Activated T-helper 1 cell treated with anti-CD3 and anti-CD28 coated beads, Interleukin-12 subunit alpha, Interleukin-12 subunit beta, Interleukin-2, Interleukin-4 antibody, amounts not matched to agents 30 ng/mL and 10 ng/mL and 1 ng/mL, durations not matched to agents 14 hours and 24 hours and 36 hours (primary cell): ENCODE measurements at regions of chr2 and their contacts with region 1.

Region 1: DNA sequence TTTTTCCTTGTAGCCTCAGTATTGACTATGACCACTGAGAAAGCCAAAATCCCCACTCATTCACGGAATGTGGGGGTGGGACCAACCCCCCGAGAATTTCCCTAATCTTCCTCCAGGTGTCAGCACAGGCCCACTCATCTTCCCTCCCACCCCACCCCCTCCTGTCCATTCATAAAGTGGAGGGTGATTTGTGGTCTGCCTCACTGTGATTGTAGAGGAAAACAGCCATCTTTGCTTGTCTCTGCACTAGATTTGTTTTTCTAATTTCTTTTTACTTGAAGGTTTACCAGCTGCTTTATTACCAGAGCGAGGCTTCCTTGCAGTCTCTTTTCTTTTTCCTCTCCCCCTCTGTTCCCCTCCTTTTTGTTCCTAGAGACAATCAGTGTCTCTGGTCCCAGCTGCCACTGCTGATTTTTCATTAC is 171.8 kb downstream of the ICOS start:
- DNase-seq: peak; percentile 18
- H3K4me3 Mint-ChIP-seq: peak overlapping the region; percentile 60
- H3K27ac Mint-ChIP-seq: peak overlapping the region; percentile 90
- H3K4me1 Mint-ChIP-seq: peaks cover 81% of the 10 kb centered on the region
- H3K27me3 Mint-ChIP-seq: no peaks in the 10 kb centered on the region

Region 2: DNA sequence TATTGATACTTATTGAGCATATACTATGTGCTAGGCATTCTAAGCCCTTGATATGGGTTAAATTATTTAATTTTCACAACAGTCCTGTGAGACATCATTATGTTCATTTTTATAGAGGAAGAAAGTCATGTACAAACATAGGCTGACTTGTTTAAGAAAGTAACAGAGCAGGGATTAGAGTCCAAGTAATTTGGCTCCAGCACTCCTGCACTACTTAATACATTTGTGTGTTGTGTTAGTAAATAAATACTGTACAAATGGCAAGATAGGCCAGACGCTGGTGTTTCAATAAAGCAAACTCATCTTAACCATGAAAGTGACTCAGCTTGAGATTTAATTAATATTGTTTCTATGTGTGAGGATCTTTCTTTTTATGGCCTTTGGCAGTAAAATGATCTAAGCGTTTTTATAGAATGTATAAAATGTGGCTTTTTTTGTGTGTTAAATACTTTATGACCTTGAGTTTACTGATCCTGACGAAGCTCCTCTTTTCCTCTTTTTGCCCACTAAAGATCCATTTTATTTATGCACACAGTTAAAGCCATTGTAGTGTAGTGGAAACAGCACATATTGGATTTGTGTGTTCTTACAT is 1072.4 kb before region 1 on chr2:
- intact Hi-C with region 1: no loop called
- DNase-seq: no peak
- H3K4me3 Mint-ChIP-seq: no peak overlapping the region
- H3K27ac Mint-ChIP-seq: no peak overlapping the region
- H3K4me1 Mint-ChIP-seq: peaks cover 9% of the 10 kb centered on the region
- H3K27me3 Mint-ChIP-seq: no peaks in the 10 kb centered on the region

Region 3: GRCh38 chr2:203893401-203893800 is 214.9 kb before region 1 on chr2:
- intact Hi-C with region 1: loop called (anchors 1 kb)
- DNase-seq: no peak
- H3K4me3 Mint-ChIP-seq: no peak overlapping the region
- H3K27ac Mint-ChIP-seq: peak overlapping the region; percentile 89
- H3K4me1 Mint-ChIP-seq: peaks cover 73% of the 10 kb centered on the region
- H3K27me3 Mint-ChIP-seq: no peaks in the 10 kb centered on the region

Region 4: GRCh38 chr2:204015118-204015843 is 93.1 kb before region 1 on chr2:
- intact Hi-C with region 1: loop called (anchors 1 kb)
- DNase-seq: no peak
- H3K4me3 Mint-ChIP-seq: peak overlapping the region; percentile 27
- H3K27ac Mint-ChIP-seq: peak overlapping the region; percentile 73
- H3K4me1 Mint-ChIP-seq: peaks cover 90% of the 10 kb centered on the region
- H3K27me3 Mint-ChIP-seq: no peaks in the 10 kb centered on the region

Region 5: GRCh38 chr2:204145263-204145751 is 37.0 kb after region 1 on chr2:
- intact Hi-C with region 1: loop called (anchors 1 kb)
- DNase-seq: peak; percentile 71
- H3K4me3 Mint-ChIP-seq: peak overlapping the region; percentile 79
- H3K27ac Mint-ChIP-seq: peak overlapping the region; percentile 63
- H3K4me1 Mint-ChIP-seq: peaks cover 15% of the 10 kb centered on the region
- H3K27me3 Mint-ChIP-seq: peaks cover 8% of the 10 kb centered on the region

Region 6: DNA sequence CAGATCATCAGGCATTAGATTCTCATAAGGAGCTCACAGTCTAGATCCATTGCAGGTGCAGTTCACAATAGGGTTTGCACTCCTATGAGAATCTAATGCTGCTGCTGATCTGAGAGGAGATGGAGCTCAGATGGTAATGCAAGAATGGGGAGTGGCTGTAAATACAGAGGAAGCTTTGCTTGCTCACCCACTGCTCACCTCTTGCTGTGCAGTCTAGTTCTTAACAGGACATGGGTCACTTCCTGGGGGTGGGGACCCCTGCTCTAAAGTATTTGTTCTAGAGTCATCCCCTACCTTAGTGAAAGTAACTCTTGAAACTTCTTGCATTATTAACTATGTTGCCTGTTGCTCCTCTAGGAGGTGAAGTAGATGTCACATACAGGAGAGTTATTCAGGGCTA is 265.6 kb after region 1 on chr2:
- intact Hi-C with region 1: no loop called
- DNase-seq: no peak
- H3K4me3 Mint-ChIP-seq: no peak overlapping the region
- H3K27ac Mint-ChIP-seq: no peak overlapping the region
- H3K4me1 Mint-ChIP-seq: no peaks in the 10 kb centered on the region
- H3K27me3 Mint-ChIP-seq: peaks cover 18% of the 10 kb centered on the region

Region 7: GRCh38 chr2:204885747-204886146 is 777.4 kb after region 1 on chr2:
- intact Hi-C with region 1: loop called (anchors 10 kb)
- DNase-seq: no peak
- H3K4me3 Mint-ChIP-seq: no peak overlapping the region
- H3K27ac Mint-ChIP-seq: no peak overlapping the region
- H3K4me1 Mint-ChIP-seq: peaks cover 25% of the 10 kb centered on the region
- H3K27me3 Mint-ChIP-seq: no peaks in the 10 kb centered on the region

Region 8: DNA sequence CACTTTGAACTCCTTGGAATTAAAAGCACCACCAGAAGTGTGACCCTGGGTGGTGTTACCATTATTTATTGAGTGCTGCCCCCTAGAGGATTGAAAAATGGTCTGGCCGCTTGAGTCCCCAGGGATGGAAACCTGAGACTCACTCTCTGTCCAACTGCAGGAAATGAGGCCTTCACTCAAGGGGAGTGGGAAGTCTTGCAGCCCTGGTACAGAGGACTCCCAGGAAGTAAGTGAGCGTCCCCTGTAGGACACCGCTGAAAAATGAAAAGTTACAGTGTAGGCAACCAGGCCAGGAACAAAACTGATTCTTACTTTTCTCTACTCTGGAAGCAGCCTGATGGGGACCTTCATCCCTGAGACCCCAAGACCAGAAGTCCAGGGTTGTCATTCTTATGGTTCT is 1571.7 kb after region 1 on chr2:
- intact Hi-C with region 1: loop called (anchors 2 kb)
- DNase-seq: peak; percentile 44
- H3K4me3 Mint-ChIP-seq: peak overlapping the region; percentile 43
- H3K27ac Mint-ChIP-seq: peak overlapping the region; percentile 22
- H3K4me1 Mint-ChIP-seq: peaks cover 45% of the 10 kb centered on the region
- H3K27me3 Mint-ChIP-seq: peaks cover 39% of the 10 kb centered on the region